Mammary epithelial cell (primary cell): ENCODE measurements at regions of chr12 and their contacts with region 1.

Region 1: GRCh38 chr12:120725659-120726509 is at the start of gene ACADS:
- DNase-seq: peak; percentile 74
- H3K4me3 ChIP-seq: peak within 1 kb of the TSS; percentile 35 to 51 (median 50)
- H3K27ac ChIP-seq: no peak within 1 kb of the TSS
- H3K4me1 ChIP-seq: peaks cover 12% of the 10 kb centered on the region
- H3K27me3 ChIP-seq: no peaks in the 10 kb centered on the region
- CTCF ChIP-seq: no peak
- total RNA-seq, gene ACADS: 1.0 to 3.7 TPM

Region 2: GRCh38 chr12:120495723-120496412 is 230.0 kb before region 1 on chr12 and contains the start of gene DYNLL1:
- CTCF ChIA-PET with region 1: no interaction called
- dilution Hi-C with region 1: no loop called
- in situ Hi-C with region 1: no loop called
- intact Hi-C with region 1: no loop called
- DNase-seq: peak; percentile 94
- H3K4me3 ChIP-seq: peak within 1 kb of the TSS; percentile 73 to 81 (median 74)
- H3K27ac ChIP-seq: peak within 1 kb of the TSS; percentile 80
- H3K4me1 ChIP-seq: peaks cover 14% of the 10 kb centered on the region
- H3K27me3 ChIP-seq: no peaks in the 10 kb centered on the region
- CTCF ChIP-seq: no peak
- total RNA-seq, gene DYNLL1: 210 to 390 TPM

Region 3: GRCh38 chr12:120698665-120699064 is 27.2 kb before region 1 on chr12:
- CTCF ChIA-PET with region 1: no interaction called
- dilution Hi-C with region 1: no loop called
- in situ Hi-C with region 1: no loop called
- intact Hi-C with region 1: no loop called
- DNase-seq: no peak
- H3K4me3 ChIP-seq: no peak overlapping the region
- H3K27ac ChIP-seq: no peak overlapping the region
- H3K4me1 ChIP-seq: no peaks in the 10 kb centered on the region
- H3K27me3 ChIP-seq: no peaks in the 10 kb centered on the region
- CTCF ChIP-seq: no peak

Region 4: GRCh38 chr12:120783197-120783596 is 57.3 kb after region 1 on chr12:
- CTCF ChIA-PET with region 1: no interaction called
- dilution Hi-C with region 1: loop called (anchors 10 kb)
- in situ Hi-C with region 1: no loop called
- intact Hi-C with region 1: no loop called
- DNase-seq: peak; percentile 48
- H3K4me3 ChIP-seq: no peak overlapping the region
- H3K27ac ChIP-seq: no peak overlapping the region
- H3K4me1 ChIP-seq: peaks cover 9% of the 10 kb centered on the region
- H3K27me3 ChIP-seq: no peaks in the 10 kb centered on the region
- CTCF ChIP-seq: no peak

Region 5: GRCh38 chr12:121839993-121840761 is 1114.3 kb after region 1 on chr12:
- CTCF ChIA-PET with region 1: no interaction called
- dilution Hi-C with region 1: no loop called
- in situ Hi-C with region 1: no loop called
- intact Hi-C with region 1: no loop called
- DNase-seq: no peak
- H3K4me3 ChIP-seq: peak overlapping the region; percentile 43 to 74 (median 70)
- H3K27ac ChIP-seq: peak overlapping the region; percentile 39
- H3K4me1 ChIP-seq: no peaks in the 10 kb centered on the region
- H3K27me3 ChIP-seq: no peaks in the 10 kb centered on the region
- CTCF ChIP-seq: no peak